BJ (cell line): ENCODE measurements at regions of chr2 and their contacts with region 1.

Region 1: DNA sequence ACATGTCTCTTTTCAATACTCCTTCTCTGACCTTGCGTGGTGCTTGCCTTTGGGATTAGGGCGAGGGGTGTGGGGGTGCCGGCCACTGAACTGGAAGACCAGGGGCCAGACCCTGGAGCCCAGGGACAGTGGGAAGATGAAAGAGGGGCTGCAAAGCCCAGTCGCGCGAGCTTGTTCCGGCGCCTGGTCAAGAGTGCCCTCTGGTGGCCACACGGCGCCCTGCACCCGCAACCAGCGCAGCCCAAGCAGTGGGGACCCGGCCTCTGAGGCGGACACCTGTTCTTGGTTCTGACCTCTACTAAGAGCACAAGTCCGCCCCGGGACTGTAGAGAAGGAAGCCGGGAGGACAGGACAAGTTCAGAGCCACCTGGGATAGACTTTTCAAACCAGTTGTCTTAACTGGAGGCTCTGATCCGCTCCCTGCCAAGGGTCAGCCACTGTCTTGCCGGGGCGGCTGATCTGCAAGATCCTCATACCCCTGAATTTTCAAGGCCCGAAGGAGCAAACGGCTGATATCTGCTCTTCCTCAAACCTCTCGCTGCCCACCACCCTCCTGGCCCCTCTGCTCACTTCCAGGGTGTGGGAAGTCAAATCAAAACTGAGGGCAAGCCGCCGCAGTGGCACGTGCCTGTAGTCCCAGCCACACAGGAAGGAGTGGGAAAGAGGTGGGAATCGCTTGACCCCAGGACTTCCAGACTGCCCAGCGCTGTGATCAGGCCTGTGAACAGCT is 14.9 kb upstream of the MSH6 start:
- DNase-seq: no peak
- H3K4me3 ChIP-seq: no peak overlapping the region; the same call in 1 of the 2 replicates
- H3K27me3 ChIP-seq: no peaks in the 10 kb centered on the region
- CTCF ChIP-seq: peak; percentile 99

Region 2: DNA sequence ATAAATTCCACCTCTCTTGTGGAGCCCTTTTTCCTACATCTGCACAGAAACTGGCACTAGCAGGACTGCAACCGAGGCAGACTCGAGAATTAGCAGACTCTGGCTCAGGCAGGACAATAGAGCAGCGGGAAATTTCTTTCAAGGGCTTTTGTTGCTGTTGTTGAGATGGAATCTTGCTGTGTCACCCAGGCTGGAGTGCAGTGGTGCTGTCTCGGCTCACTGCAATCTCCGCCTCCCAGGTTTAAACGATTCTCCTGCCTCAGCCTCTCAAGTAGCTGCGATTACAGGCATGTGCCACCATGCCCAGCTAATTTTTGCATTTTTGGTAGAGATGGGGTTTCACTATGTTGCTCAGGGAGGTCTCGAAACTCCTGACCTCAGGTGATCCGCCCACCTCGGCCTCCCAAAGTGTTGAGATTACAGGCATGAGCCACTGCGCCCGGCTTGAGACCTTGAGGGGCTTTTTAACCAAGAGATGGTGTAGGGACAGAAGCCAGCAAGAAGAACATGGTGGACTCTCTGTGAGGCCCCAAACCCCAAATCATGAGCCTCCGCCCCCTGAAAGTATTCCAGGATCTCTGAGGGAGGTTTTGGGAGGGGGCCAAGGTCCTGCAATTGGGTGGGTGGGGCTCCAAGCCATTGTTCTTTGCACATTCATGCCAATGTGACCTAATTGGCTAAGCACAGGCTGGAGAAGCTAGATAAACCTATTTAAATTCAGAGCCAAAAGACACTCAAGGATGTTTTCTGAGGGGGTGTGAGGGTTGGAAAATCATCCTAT is 433.5 kb before region 1 on chr2:
- CTCF ChIA-PET with region 1: interaction called, 19 read pairs
- POLR2A ChIA-PET with region 1: no interaction called
- DNase-seq: no peak
- H3K4me3 ChIP-seq: no peak overlapping the region
- H3K27me3 ChIP-seq: no peaks in the 10 kb centered on the region
- CTCF ChIP-seq: no peak

Region 3: DNA sequence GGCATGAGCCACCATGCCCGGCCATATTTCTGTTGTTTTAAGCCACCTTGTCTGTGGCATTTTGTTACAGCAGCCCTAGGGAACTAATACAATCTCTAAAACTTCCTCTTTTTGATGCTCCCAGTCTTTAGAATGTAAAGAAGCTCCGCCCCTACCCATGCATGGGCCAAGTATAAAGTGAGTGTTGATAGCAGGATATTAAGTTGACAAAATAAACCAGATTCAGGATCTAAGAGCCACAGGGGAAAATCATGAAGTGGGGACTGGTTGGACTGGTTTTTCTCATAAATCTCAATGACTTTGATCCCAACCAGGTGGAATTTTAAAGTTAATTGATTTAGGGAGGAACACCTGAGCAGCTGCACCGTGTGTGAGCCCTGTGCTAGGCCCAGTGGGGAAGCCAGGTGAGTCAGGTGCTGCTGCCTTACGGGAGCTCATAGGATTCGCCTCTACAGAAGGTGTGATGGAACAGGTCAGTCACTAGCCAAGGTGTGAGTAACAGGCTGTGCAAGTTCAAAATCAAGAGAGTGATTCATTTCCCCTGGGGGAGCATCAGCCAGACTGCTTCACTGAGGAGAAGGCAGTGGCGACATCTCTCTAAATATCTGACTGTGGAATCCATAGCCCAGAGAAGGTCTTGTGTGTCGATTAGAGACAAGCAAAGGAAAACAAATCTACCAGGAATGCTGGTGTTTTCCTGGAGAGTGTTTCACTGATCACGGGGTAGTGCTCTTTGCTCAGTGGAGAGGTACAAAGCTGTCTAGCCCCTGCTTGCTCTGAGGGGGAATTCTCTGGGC is 428.1 kb before region 1 on chr2:
- CTCF ChIA-PET with region 1: interaction called, 19 read pairs
- POLR2A ChIA-PET with region 1: no interaction called
- DNase-seq: no peak
- H3K4me3 ChIP-seq: no peak overlapping the region
- H3K27me3 ChIP-seq: no peaks in the 10 kb centered on the region
- CTCF ChIP-seq: no peak

Region 4: GRCh38 chr2:47437287-47437686 is 330.8 kb before region 1 on chr2:
- CTCF ChIA-PET with region 1: interaction called, 107 read pairs
- POLR2A ChIA-PET with region 1: no interaction called
- DNase-seq: no peak
- H3K4me3 ChIP-seq: no peak overlapping the region
- H3K27me3 ChIP-seq: no peaks in the 10 kb centered on the region
- CTCF ChIP-seq: peak; percentile 44

Region 5: DNA sequence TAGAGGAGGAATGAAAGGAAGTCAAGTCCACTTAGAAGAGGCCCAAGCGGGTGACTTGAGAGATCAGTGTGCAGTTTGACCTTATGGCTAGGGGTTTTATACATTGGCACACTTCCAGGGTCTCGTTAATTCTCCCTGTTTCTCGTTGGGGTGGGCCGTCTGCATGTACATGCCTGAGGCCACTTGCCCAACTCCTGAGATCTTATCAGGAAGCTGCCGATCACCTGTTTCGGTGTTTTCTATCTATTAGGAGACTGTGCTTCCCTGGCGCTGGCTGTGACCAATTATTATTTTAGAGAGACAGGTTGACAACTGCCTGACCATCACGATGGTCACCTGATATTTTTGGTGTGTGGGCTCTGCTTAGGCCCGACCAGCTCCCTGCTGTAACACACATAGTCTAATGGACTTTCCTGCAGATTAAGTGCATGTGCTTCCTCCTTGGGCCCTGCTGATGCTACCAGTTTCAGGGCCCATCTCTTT is 16.1 kb before region 1 on chr2:
- CTCF ChIA-PET with region 1: interaction called, 18 read pairs
- POLR2A ChIA-PET with region 1: no interaction called
- DNase-seq: no peak
- H3K4me3 ChIP-seq: no peak overlapping the region
- H3K27me3 ChIP-seq: no peaks in the 10 kb centered on the region; the same call in 1 of the 2 replicates
- CTCF ChIP-seq: no peak

Region 6: GRCh38 chr2:47782671-47783485 is 14.8 kb after region 1 on chr2 and contains the start of gene MSH6:
- CTCF ChIA-PET with region 1: interaction called, 28 read pairs
- POLR2A ChIA-PET with region 1: no interaction called
- DNase-seq: peak; percentile 39
- H3K4me3 ChIP-seq: peak within 1 kb of the TSS; percentile 89
- H3K27me3 ChIP-seq: no peaks in the 10 kb centered on the region
- CTCF ChIP-seq: no peak
- polyA plus RNA-seq, gene MSH6: 13.7 and 26.2 TPM in 2 replicates

Region 7: GRCh38 chr2:47862949-47863348 is 94.9 kb after region 1 on chr2:
- CTCF ChIA-PET with region 1: no interaction called
- POLR2A ChIA-PET with region 1: no interaction called
- DNase-seq: no peak
- H3K4me3 ChIP-seq: no peak overlapping the region
- H3K27me3 ChIP-seq: no peaks in the 10 kb centered on the region
- CTCF ChIP-seq: no peak

Region 8: GRCh38 chr2:48107326-48107925 is 339.4 kb after region 1 on chr2:
- CTCF ChIA-PET with region 1: interaction called, 13 read pairs
- POLR2A ChIA-PET with region 1: no interaction called
- DNase-seq: no peak
- H3K4me3 ChIP-seq: no peak overlapping the region
- H3K27me3 ChIP-seq: no peaks in the 10 kb centered on the region
- CTCF ChIP-seq: no peak

Region 9: DNA sequence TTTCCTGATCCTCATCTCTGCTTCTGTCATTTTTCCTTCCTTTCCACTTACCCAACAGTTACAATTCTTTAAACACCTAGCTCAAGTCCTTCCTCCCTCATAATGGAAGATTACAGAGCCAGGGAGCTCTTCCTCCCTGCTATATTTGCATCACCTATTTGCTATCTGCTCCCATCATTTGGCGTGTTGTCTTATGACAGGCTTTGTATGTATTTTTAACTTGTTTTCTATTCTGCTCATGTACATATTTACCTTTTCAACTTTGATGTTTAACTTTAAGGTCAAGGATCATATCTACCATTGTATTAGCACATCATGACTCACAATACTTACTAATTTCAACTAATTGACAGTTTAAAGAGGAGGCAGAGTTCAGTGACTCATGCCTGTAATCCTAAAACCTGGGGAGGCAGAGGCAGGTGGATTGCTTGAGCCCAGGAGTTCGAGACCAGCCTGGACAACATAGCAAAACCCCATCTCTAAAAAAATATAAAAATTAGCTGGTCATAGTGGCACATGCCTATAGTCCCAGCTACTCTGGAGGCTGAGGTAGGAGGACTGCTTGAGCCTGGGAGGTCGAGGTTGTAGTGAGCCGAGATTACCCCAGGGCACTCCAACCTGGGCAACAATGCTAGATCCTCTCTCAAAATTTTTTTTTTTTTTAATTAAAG is 453.9 kb after region 1 on chr2:
- CTCF ChIA-PET with region 1: no interaction called
- POLR2A ChIA-PET with region 1: no interaction called
- DNase-seq: no peak
- H3K4me3 ChIP-seq: no peak overlapping the region
- H3K27me3 ChIP-seq: no peaks in the 10 kb centered on the region
- CTCF ChIP-seq: no peak